A549 (cell line): ENCODE measurements at regions of chr15 and their contacts with region 1.

Region 1: DNA sequence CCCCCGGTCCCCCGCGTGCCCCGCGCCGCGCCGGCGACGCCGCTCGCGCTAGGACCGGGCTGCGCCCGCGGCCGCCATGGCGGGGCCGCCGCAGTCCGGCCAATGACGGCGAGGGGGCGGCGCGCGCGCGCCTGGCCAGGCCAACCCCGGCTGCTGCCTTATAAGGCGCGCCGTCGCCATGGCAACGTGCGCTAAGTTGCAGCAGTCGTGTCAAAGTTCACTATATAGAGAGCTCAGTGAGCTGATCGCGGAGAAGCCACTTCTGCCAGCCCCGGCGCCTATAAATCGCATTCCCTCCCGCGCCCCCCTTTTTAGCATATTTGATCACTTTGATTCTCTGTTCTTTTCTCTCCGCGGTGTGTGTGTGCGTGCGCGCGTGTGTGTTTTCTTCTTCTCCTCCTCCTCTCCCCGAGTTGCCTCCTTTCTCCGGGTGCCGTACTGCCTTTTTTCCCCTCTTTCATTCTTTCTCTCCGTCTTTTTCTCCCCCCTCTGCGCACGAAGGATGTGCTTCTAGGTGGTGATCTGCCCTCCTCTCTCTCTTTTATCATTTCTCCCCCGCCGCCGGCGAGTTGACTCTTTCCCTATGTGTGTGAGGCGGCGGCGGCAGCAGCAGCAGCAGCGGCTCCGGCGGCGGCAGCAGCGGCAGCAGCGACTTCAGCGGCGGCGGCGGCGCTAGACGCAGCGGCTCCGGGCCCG is at the start of gene NR2F2:
- DNase-seq: peak; percentile 91 to 98
- ATAC-seq: peak; percentile 57 to 71
- H3K4me3 ChIP-seq: peak within 1 kb of the TSS; percentile 71
- H3K27ac ChIP-seq: peak within 1 kb of the TSS; percentile 89 to 99
- H3K4me1 ChIP-seq: peaks cover 42% of the 10 kb centered on the region
- CTCF ChIP-seq: no peak
- EP300 ChIP-seq: no peak
- POLR2A ChIP-seq: peak; percentile 63
- RAD21 ChIP-seq: no peak
- polyA plus RNA-seq, gene NR2F2: 11.8 and 14.4 TPM in 2 replicates

Region 2: DNA sequence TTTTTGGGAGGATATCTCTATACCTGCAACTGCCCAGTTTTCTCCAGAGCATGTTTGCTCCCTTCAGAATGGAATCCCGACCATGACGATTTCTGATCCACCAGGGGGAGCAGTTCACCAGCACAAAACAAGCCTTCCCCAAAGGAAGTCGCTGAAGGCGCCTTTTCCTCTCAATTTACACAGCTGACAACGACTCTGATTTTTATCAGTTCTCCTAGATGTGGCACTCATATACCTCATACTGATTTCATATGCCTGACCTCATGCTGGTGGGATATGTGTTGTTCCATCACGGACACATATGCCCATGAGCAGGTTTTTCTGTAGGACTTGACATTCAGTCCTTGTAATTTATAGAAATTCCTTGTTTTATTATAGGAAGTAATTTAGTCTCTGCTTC is 1071.1 kb before region 1 on chr15:
- CTCF ChIA-PET with region 1: interaction called, 27 read pairs
- POLR2A ChIA-PET with region 1: no interaction called
- DNase-seq: peak; percentile 43 to 81
- ATAC-seq: peak; percentile 93 to 98
- H3K4me3 ChIP-seq: no peak overlapping the region
- H3K27ac ChIP-seq: no peak overlapping the region
- H3K4me1 ChIP-seq: no peaks in the 10 kb centered on the region; the same call in 2 of the 3 replicates
- CTCF ChIP-seq: peak; percentile 91
- EP300 ChIP-seq: no peak
- POLR2A ChIP-seq: no peak
- RAD21 ChIP-seq: peak; percentile 95 to 96

Region 3: DNA sequence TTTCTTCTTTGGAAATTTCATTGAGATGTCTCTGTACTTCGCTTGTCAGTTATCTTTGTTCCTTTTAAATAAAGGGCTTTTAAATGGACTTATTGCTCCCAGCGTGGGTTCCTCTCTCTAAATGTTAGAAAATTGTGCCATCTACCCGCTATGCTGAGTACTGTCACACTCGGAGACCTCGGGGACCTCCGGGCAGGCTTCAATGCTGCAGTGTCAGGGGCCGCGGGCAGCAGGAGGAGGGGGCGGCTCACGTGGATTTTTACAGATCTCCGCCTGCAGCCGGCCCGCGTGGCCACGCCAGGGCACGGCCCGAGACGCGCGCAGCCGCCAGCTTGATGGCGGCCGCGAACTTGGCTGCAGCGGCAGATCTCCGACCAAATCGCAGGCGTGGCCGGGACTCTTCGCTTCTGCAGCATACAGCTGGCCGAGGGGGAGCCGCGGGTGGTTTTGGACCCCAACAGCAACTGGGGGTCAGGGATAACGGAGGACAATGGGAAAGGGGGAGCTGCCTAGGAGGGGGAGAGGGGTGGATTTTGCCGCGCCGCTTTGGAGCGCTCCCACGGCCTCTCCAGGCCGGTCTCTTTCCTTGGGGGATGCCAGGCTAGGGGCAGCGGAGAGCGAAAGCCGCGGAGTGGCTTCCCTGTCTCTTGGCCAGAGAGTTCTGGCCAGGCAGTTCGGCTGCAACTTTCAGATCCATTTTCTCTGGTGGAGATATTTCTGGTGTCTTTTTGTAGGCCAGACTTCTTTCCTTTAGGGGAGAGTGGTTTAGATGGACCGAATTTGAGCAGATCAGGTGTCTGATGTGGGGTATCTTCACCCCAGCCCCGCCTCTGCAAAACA is 15.2 kb after region 1 on chr15:
- CTCF ChIA-PET with region 1: interaction called, 280 read pairs
- POLR2A ChIA-PET with region 1: interaction called, 113 read pairs
- DNase-seq: peak; percentile 80 to 94
- ATAC-seq: peak; percentile 79 to 89
- H3K4me3 ChIP-seq: peak overlapping the region; percentile 46
- H3K27ac ChIP-seq: peak overlapping the region; percentile 51 to 76
- H3K4me1 ChIP-seq: peaks cover 14% of the 10 kb centered on the region; the same call in 2 of the 3 replicates
- CTCF ChIP-seq: peak; percentile 87
- EP300 ChIP-seq: no peak
- POLR2A ChIP-seq: no peak
- RAD21 ChIP-seq: peak; percentile 94 to 96

Region 4: DNA sequence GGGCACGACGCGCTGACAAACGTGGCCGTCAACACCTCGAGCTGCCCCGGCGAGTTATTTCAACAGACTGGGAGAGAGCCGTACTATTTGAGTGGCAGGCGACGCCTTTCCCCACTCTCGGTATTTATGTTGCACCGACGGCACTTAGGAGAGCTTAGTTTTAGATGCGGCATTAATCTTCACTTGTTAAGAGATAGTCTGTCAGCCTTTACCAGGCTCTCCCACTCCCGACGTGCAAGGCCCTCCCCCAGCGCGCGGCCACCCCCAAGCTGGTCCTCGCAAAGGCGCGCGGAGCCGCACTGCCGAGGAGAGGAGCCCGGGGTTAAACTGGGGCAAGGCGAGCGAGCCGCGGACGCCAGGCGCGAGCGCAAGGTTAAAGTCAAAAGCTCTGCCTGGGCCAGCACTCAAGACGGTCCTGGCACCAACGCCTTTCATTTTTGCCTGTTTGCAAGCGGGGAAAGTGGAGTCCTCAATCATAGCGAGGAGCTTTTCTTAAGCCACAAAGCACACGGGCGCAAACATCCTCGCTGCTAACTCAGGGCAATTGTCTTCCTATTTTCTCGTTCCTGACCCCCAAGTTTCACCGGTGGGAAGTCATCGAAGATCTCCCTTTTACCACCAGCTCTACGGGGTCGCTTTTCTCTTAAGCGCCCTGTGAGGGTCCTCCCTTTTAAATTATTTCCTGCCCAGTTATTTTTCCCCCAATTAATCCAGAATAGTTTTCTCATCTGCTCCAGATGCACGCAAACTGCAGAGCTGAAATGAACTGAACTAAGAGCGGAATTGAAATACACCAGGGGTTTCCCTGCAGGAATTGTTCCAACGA is 86.5 kb after region 1 on chr15:
- CTCF ChIA-PET with region 1: interaction called, 10 read pairs
- POLR2A ChIA-PET with region 1: no interaction called
- DNase-seq: peak in 1 of 2 experiments; percentile 14
- ATAC-seq: peak; percentile 51 to 73; a peak in 4 of 6 replicates
- H3K4me3 ChIP-seq: peak overlapping the region; percentile 31; the same call in 2 of the 3 replicates
- H3K27ac ChIP-seq: no peak overlapping the region
- H3K4me1 ChIP-seq: peaks cover 15% of the 10 kb centered on the region
- CTCF ChIP-seq: no peak
- EP300 ChIP-seq: no peak
- POLR2A ChIP-seq: no peak
- RAD21 ChIP-seq: no peak

Region 5: GRCh38 chr15:97248376-97248775 is 917.8 kb after region 1 on chr15:
- CTCF ChIA-PET with region 1: interaction called, 10 read pairs
- POLR2A ChIA-PET with region 1: no interaction called
- DNase-seq: no peak
- ATAC-seq: no peak
- H3K4me3 ChIP-seq: no peak overlapping the region
- H3K27ac ChIP-seq: no peak overlapping the region
- H3K4me1 ChIP-seq: no peaks in the 10 kb centered on the region
- CTCF ChIP-seq: no peak
- EP300 ChIP-seq: no peak
- POLR2A ChIP-seq: no peak
- RAD21 ChIP-seq: no peak